ENCODE measurements at regions of chr15 and their contacts with region 1.

Region 1: GRCh38 chr15:37100109-37100965 is at the start of gene MEIS2:
- DNase-seq: peak; percentile 66 to 85
- H3K4me3 ChIP-seq: peak within 1 kb of the TSS; percentile 91
- H3K27ac ChIP-seq: peak within 1 kb of the TSS; percentile 89
- H3K4me1 ChIP-seq: peaks cover 17% of the 10 kb centered on the region; the same call in 1 of the 2 replicates
- H3K27me3 ChIP-seq: no peaks in the 10 kb centered on the region
- CTCF ChIP-seq: no peak
- total RNA-seq, gene MEIS2: 25.0 and 29.1 TPM in 2 replicates

Region 2: DNA sequence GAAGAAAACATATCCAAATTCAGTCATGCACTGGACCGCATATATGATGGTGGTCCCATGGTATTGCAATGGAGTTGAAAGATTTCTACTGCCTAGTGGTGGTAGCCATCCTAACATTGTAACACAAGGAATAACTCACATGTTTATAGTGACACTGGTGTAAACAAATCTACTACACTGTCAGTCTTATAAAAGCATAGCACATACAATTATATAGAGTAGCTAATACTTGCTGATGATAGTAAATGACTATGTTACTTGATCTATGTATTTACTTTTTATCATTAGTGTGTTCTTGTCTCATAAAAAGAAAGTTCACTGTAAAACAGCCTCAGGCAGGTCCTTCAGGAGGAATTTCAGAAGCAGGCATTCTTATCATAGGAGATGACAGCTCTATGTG is 616.9 kb before region 1 on chr15:
- CTCF ChIA-PET with region 1: no interaction called
- POLR2A ChIA-PET with region 1: interaction called, 11 read pairs
- intact Hi-C with region 1: no loop called
- DNase-seq: no peak
- H3K4me3 ChIP-seq: no peak overlapping the region
- H3K27ac ChIP-seq: no peak overlapping the region
- H3K4me1 ChIP-seq: no peaks in the 10 kb centered on the region
- H3K27me3 ChIP-seq: no peaks in the 10 kb centered on the region
- CTCF ChIP-seq: no peak

Region 3: DNA sequence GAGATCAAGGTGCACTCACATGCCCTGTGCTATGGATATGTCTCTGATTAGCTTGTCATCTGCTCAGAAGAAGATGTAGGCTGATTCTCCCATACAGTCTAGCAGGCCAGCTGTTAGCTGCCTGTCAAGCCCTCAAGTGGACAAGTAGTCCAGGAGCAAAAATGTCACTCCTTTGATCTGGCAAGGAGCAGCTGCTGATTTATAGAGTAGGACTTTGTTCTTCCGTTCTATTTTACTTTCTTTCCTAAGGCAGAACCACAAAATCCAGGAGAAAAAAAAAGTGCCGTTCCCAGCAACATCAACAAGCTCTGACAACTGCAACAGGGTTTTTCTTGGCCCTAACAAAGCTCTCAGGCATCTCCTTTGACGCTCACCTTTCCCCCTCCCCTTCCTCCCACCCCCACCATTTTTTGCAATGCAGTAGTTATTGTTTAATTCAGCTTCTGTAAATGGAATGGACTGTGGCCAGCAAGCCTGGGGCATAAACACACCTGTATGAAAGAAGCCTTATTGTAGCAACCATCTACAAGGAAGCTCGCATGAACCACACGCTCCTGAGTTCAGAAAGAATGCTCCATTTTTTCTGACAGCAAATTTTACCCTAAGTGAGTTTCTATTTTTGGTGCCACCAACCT is 196.3 kb before region 1 on chr15:
- CTCF ChIA-PET with region 1: no interaction called
- POLR2A ChIA-PET with region 1: interaction called, 6 read pairs
- intact Hi-C with region 1: loop called (anchors 5 kb)
- DNase-seq: peak; percentile 68 to 89
- H3K4me3 ChIP-seq: no peak overlapping the region
- H3K27ac ChIP-seq: peak overlapping the region; percentile 21; the same call in 1 of the 2 replicates
- H3K4me1 ChIP-seq: peaks cover 17% of the 10 kb centered on the region
- H3K27me3 ChIP-seq: no peaks in the 10 kb centered on the region
- CTCF ChIP-seq: no peak

Region 4: GRCh38 chr15:36965570-36966342 is 134.6 kb before region 1 on chr15:
- CTCF ChIA-PET with region 1: no interaction called
- POLR2A ChIA-PET with region 1: interaction called, 10 read pairs
- intact Hi-C with region 1: no loop called
- DNase-seq: no peak
- H3K4me3 ChIP-seq: no peak overlapping the region
- H3K27ac ChIP-seq: no peak overlapping the region
- H3K4me1 ChIP-seq: no peaks in the 10 kb centered on the region
- H3K27me3 ChIP-seq: no peaks in the 10 kb centered on the region
- CTCF ChIP-seq: no peak

Region 5: GRCh38 chr15:37059086-37059485 is 41.3 kb before region 1 on chr15:
- CTCF ChIA-PET with region 1: no interaction called
- POLR2A ChIA-PET with region 1: interaction called, 13 read pairs
- intact Hi-C with region 1: loop called (anchors 2 kb)
- DNase-seq: peak; percentile 15 to 91
- H3K4me3 ChIP-seq: no peak overlapping the region
- H3K27ac ChIP-seq: peak overlapping the region; percentile 60
- H3K4me1 ChIP-seq: peaks cover 54% of the 10 kb centered on the region
- H3K27me3 ChIP-seq: no peaks in the 10 kb centered on the region
- CTCF ChIP-seq: no peak

Region 6: DNA sequence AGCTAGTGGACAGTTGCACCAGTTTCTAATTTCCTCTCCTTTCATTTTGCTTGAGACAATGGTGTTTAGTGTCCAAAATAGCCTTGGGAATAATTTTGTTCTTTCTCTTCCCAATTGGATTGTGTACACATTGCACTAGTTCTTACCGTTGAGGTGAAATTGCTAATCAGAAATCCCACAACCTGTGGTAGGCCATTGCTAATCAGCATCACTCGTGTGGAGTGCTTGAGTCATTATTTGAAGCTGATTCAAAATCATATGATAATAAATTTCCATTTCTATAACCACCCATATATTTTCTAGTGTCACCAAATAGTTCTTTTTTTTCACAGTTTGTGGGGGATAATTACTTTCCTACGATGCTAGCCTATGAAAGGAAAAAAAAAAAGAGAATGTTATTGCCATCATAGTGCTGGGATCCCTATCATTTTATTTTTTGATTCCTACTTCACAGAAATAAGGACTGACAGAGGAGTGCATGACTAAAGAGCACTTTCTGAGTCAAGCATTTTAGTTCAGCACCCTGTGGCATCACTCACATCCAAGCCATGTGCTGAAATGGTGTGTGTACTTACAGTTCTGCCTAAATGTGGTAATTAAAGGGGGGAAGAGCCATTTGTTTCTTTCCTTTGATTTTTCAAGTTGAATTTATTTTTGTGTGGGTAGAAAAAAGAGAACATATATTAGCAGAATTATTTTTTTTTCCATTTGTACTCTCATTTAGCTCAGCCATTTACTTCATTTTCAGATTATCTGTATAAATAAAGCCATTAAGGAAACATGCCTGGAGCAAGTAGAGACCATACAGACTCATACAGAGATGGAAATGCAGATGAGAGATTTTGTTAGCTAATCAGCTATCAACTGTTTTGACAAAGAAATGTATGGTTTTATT is 108.1 kb after region 1 on chr15:
- CTCF ChIA-PET with region 1: no interaction called
- POLR2A ChIA-PET with region 1: interaction called, 22 read pairs
- intact Hi-C with region 1: no loop called
- DNase-seq: no peak
- H3K4me3 ChIP-seq: no peak overlapping the region
- H3K27ac ChIP-seq: no peak overlapping the region
- H3K4me1 ChIP-seq: no peaks in the 10 kb centered on the region
- H3K27me3 ChIP-seq: no peaks in the 10 kb centered on the region
- CTCF ChIP-seq: no peak

Measured in PC-9 (cell line).